Right cardiac atrium (tissue), 5 donors: ENCODE measurements at regions of chr12 and their contacts with region 1.

Region 1: GRCh38 chr12:68317047-68317667 is 15.0 kb downstream of the MDM1 start:
- DNase-seq: no peak
- ATAC-seq: no peak
- H3K4me3 ChIP-seq: no peak overlapping the region
- H3K27ac ChIP-seq: no peak overlapping the region
- H3K4me1 ChIP-seq: no peaks in the 10 kb centered on the region
- H3K27me3 ChIP-seq: no peaks in the 10 kb centered on the region

Region 2: DNA sequence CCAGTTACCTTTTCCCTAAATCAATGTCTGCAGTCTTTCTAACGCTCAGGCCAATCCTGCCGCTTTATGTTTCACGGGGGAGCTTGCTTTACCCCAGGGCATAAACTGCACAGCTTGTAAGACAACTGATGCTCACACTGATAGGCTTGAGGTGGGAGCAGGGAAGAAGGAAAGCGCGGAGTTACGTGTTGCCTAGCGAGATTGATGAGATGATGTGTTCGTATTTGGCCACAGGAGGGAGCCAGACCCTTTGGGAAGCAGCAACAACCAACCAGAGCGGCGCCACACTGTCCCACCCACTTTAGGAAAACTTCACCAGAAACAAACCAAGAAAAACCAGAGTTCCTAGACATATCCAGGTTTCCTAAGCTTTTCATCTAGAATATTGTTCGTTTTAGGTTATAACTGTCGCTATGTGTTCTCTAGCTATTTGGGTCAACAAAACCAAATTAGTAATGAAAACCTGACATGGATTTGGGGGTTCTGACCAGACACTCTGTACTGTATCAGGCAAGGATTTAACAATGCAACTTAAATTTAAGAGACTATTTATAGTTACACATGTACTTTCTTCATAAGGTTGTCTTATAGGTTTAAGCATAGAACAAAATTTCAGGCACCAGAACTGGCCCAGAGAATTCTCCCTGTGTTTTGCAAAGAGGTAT is 93.9 kb before region 1 on chr12:
- intact Hi-C with region 1: loop called (anchors 2 to 5 kb)
- DNase-seq: peak; percentile 75 to 89 (median 82)
- ATAC-seq: peak; percentile 97 to 98
- H3K4me3 ChIP-seq: no peak overlapping the region
- H3K27ac ChIP-seq: no peak overlapping the region
- H3K4me1 ChIP-seq: no peaks in the 10 kb centered on the region
- H3K27me3 ChIP-seq: no peaks in the 10 kb centered on the region

Region 3: DNA sequence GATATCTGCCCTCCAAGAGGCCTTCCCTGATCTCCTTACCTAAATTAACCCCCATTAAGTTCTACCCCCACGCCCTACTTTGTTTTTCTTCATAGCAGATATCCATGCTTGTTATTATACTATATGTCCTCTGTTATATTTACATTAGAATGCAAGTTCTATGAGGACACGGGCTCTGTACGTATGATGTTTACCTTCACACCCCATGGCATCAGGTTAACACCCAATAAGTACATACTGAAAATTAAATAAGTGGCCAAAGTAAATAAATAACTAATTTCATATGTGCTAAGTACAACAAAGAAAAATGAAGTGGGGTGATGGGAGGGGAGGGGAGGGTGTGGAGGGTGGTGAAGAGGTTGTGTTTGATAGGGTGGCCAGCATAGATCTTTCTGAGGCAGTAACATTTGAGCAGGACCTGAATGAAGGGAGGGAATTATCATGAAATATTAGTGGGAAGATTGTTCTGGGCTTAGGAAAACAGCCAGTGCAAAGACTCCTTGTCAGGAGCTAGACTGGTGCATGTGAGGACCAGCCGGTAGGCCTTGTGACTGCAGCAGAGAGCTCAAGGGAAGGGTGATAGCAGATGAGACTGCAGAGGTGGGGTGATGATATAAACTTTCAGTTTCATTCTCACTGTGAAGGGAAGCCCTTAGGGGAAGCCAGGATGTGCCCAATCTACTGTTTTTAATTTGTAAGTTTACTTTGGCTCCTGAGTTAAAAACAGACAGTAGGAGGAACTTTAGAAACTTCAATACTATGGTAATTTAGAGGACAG is 76.4 kb before region 1 on chr12:
- intact Hi-C with region 1: loop called in 1 of 4 experiments (anchors 5 kb)
- DNase-seq: no peak
- ATAC-seq: peak; percentile 82 to 83
- H3K4me3 ChIP-seq: no peak overlapping the region
- H3K27ac ChIP-seq: no peak overlapping the region
- H3K4me1 ChIP-seq: no peaks in the 10 kb centered on the region
- H3K27me3 ChIP-seq: no peaks in the 10 kb centered on the region